ENCODE measurements at regions of chr1 and their contacts with region 1.

Region 1: DNA sequence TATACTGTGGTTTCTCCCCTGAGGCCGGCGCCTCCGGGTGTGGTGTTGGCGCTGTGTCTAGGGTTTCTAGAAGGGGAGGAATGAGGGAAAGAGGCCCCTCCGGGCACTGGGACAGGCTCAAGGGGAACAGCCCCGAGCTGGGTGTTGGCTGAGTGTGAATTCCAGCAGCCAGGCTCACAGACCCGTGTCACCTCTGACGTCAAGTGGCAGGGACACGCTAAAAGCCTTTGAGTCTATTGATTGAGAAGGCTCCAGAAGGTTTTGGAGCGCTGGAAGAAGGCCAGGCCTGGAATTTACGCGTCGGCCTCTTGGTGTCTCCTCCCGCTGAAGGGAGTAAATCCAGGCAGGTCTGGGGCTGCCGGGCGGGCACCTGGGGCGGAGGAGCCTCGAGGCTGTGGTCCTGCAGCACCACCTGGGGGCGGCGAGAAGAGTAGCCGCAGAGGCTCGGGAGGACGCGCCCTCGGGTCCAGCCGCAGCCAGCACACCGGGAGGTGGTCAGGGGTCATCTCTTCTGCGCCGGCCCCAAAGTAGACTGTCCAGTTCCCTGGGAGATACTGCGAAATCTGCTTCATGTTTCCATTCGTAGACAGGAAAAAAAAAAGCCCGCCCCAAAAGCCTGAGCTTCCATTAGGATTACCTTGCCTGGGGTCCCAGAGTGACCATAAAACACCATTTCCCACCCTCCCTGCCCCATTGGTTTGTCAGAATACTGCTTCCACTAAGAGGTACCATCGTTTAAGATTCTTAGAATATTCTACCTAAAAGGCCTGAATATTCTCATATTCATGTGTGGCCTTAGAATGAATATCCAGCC is 61.7 kb downstream of the TLR5 start:
- DNase-seq: peak; percentile 85
- ATAC-seq: peak; percentile 97
- H3K4me3 ChIP-seq: peak overlapping the region; percentile 11 to 85 (median 64)
- H3K4me3 Mint-ChIP-seq: peak overlapping the region; percentile 84
- H3K27ac ChIP-seq: peak overlapping the region; percentile 34 to 71
- H3K27ac Mint-ChIP-seq: peak overlapping the region; percentile 86
- H3K4me1 ChIP-seq: no peaks in the 10 kb centered on the region
- H3K4me1 Mint-ChIP-seq: no peaks in the 10 kb centered on the region
- H3K27me3 ChIP-seq: peaks cover 0 to 5% (median 0%) of the 10 kb centered on the region in 4 experiments
- H3K27me3 Mint-ChIP-seq: peaks cover 12% of the 10 kb centered on the region
- CTCF ChIP-seq: peak; percentile 96

Region 2: DNA sequence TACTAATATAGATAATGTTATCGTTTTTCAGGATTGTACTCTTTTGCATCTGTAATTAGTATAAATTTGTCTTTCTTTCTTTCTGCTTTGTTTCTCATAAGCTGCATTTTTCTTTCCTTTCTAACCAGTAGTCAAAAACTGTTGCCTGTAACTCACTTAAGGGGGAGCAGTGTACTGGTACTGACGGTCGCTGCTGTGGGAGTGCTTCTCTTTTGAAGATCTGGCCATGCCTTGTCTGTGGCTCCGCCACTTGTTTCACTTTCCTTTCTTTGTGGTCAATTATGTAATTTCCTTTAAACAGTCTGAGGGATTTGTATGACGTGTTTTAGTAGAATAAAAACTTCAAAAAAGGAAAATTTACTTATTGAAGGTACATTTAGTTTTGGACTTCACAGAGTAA is 426.5 kb before region 1 on chr1:
- CTCF ChIA-PET with region 1: interaction called, 17 read pairs
- POLR2A ChIA-PET with region 1: no interaction called
- intact Hi-C with region 1: loop called (anchors 1 kb)
- DNase-seq: peak; percentile 88
- ATAC-seq: peak; percentile 99
- H3K4me3 ChIP-seq: no peak overlapping the region
- H3K4me3 Mint-ChIP-seq: peak overlapping the region; percentile 40
- H3K27ac ChIP-seq: peak overlapping the region; percentile 81 to 95
- H3K27ac Mint-ChIP-seq: peak overlapping the region; percentile 59
- H3K4me1 ChIP-seq: peaks cover 16 to 20% of the 10 kb centered on the region in 2 donors
- H3K4me1 Mint-ChIP-seq: peaks cover 35% of the 10 kb centered on the region
- H3K27me3 ChIP-seq: no peaks in the 10 kb centered on the region
- H3K27me3 Mint-ChIP-seq: no peaks in the 10 kb centered on the region
- CTCF ChIP-seq: peak; percentile 51

Region 3: GRCh38 chr1:222732216-222733159 is 348.9 kb before region 1 on chr1:
- CTCF ChIA-PET with region 1: interaction called, 18 read pairs
- POLR2A ChIA-PET with region 1: no interaction called
- intact Hi-C with region 1: no loop called
- DNase-seq: peak; percentile 84
- ATAC-seq: peak; percentile 82
- H3K4me3 ChIP-seq: peak overlapping the region in 3 of 5 experiments; percentile 13 to 45 (median 27)
- H3K4me3 Mint-ChIP-seq: peak overlapping the region; percentile 78
- H3K27ac ChIP-seq: peak overlapping the region; percentile 62 to 84
- H3K27ac Mint-ChIP-seq: peak overlapping the region; percentile 93
- H3K4me1 ChIP-seq: peaks cover 56 to 68% of the 10 kb centered on the region in 2 donors
- H3K4me1 Mint-ChIP-seq: peaks cover 56% of the 10 kb centered on the region
- H3K27me3 ChIP-seq: no peaks in the 10 kb centered on the region
- H3K27me3 Mint-ChIP-seq: no peaks in the 10 kb centered on the region
- CTCF ChIP-seq: no peak

Region 4: DNA sequence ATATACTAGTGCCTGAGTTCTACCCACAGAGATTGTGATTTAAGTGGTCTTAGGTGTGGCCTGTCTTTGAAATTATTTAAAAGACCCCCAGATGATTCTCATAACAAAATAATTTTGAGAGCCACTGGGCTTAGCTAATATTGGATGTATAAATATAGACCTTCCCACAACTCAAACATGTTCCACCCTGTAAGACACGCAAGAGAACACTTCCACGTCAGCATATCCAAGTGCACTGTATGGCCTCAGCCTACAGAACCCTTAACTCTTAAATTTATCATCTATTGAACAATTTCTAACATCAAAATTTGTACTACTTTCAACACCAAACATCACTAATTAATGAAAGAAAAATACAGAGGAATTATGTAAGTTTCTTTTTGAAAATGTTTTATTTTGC is 341.9 kb before region 1 on chr1:
- CTCF ChIA-PET with region 1: interaction called, 18 read pairs
- POLR2A ChIA-PET with region 1: interaction called, 4 read pairs
- intact Hi-C with region 1: loop called (anchors 1 kb)
- DNase-seq: no peak
- ATAC-seq: no peak
- H3K4me3 ChIP-seq: peak overlapping the region; percentile 17 to 53 (median 33)
- H3K4me3 Mint-ChIP-seq: no peak overlapping the region
- H3K27ac ChIP-seq: peak overlapping the region; percentile 50 to 77
- H3K27ac Mint-ChIP-seq: no peak overlapping the region
- H3K4me1 ChIP-seq: peaks cover 58 to 61% of the 10 kb centered on the region in 2 donors
- H3K4me1 Mint-ChIP-seq: peaks cover 44% of the 10 kb centered on the region
- H3K27me3 ChIP-seq: no peaks in the 10 kb centered on the region
- H3K27me3 Mint-ChIP-seq: no peaks in the 10 kb centered on the region
- CTCF ChIP-seq: no peak

Region 5: DNA sequence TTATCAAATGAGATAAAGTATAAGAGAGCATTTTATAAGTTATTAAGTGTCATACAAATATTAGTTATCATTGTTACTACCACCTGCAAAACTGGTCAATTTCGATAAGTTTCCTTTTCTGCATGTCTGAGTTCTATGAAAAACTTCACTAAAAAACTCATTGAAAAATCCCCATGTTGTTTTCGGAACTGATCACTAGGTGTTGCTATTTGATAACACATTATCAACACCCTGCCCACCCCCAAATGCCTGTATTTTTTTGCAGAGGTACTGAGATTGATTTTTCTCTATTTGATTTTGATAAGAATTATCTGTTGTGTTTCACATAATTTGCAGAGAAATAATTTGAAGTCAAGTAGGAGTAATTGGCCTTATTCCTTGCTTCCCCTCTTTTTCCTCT is 288.6 kb before region 1 on chr1:
- CTCF ChIA-PET with region 1: interaction called, 120 read pairs
- POLR2A ChIA-PET with region 1: interaction called, 3 read pairs
- intact Hi-C with region 1: loop called (anchors 1 kb)
- DNase-seq: peak; percentile 54
- ATAC-seq: peak; percentile 54
- H3K4me3 ChIP-seq: no peak overlapping the region
- H3K4me3 Mint-ChIP-seq: no peak overlapping the region
- H3K27ac ChIP-seq: no peak overlapping the region
- H3K27ac Mint-ChIP-seq: peak overlapping the region; percentile 47
- H3K4me1 ChIP-seq: peaks cover 16 to 21% of the 10 kb centered on the region in 2 donors
- H3K4me1 Mint-ChIP-seq: peaks cover 40% of the 10 kb centered on the region
- H3K27me3 ChIP-seq: no peaks in the 10 kb centered on the region
- H3K27me3 Mint-ChIP-seq: no peaks in the 10 kb centered on the region
- CTCF ChIP-seq: peak; percentile 69

Region 6: DNA sequence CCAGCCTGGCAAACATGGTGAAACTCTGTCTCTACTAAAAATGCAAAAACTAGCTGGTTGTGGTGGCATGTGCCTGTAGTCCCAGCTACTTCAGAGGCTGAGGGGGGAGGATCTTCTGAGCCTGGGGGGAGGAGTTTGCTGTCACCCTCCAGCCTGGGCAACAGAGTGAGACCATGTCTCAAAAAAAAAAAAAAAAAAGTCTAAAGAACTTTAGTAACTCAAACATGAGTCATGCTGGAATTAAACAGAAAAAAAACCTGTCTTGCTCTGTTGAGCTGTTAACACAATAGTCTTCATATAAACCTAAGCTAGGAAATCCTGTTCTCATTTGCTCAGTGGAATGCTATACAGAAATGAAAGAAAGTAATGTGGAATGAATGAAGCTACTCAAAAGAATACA is 283.3 kb before region 1 on chr1:
- CTCF ChIA-PET with region 1: interaction called, 120 read pairs
- POLR2A ChIA-PET with region 1: interaction called, 3 read pairs
- intact Hi-C with region 1: no loop called
- DNase-seq: peak; percentile 61
- ATAC-seq: peak; percentile 98
- H3K4me3 ChIP-seq: no peak overlapping the region
- H3K4me3 Mint-ChIP-seq: no peak overlapping the region
- H3K27ac ChIP-seq: no peak overlapping the region
- H3K27ac Mint-ChIP-seq: peak overlapping the region; percentile 70
- H3K4me1 ChIP-seq: peaks cover 14 to 18% of the 10 kb centered on the region in 2 donors
- H3K4me1 Mint-ChIP-seq: peaks cover 13% of the 10 kb centered on the region
- H3K27me3 ChIP-seq: no peaks in the 10 kb centered on the region
- H3K27me3 Mint-ChIP-seq: no peaks in the 10 kb centered on the region
- CTCF ChIP-seq: no peak

Region 7: DNA sequence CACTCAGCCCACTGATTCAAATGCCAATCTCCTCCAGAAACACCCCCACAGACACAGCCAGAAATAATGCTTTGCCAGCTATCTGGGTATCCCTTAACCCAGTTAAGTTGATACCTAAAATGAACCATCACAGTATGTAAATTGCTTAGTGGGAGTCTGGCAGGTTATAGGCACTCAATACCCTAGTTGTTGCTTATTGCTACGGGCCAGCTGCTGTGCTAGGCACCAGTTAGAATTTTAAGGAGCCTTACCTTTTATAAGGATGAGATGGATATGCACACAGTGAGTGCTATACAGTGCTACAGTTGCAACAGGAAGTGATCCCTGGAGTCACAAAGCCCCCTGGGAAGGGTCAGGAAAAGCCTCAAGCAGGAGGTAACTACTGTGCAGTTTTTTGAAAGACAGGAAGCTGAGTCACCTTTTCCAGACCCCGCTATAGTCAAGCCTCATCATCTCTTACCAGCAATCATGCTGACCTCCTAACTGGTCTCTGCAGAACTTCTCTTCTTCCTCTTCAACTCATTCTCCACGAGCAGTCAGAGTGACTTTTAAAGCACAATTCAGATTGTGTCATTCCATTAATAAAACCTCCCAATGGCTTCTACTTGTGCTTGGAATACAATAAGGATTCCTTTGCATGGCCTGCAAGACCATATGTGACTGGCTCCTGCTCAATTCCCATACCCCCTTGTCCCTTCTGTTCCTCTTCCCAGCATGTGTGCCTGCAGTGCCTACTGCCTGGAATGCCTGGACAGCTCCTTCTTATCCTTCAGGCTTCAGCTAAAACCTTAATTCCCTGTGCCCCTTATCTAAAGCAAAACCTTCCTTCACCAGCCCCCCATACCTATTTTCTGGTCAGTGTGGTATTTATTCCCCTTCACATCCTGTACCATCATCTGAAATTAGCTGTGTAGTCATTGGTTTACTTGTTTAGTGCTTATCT is 72.1 kb after region 1 on chr1:
- CTCF ChIA-PET with region 1: no interaction called
- POLR2A ChIA-PET with region 1: no interaction called
- intact Hi-C with region 1: no loop called
- DNase-seq: no peak
- ATAC-seq: no peak
- H3K4me3 ChIP-seq: no peak overlapping the region
- H3K4me3 Mint-ChIP-seq: no peak overlapping the region
- H3K27ac ChIP-seq: no peak overlapping the region
- H3K27ac Mint-ChIP-seq: no peak overlapping the region
- H3K4me1 ChIP-seq: no peaks in the 10 kb centered on the region
- H3K4me1 Mint-ChIP-seq: no peaks in the 10 kb centered on the region
- H3K27me3 ChIP-seq: peaks cover 0 to 11% (median 1%) of the 10 kb centered on the region in 4 experiments
- H3K27me3 Mint-ChIP-seq: peaks cover 29% of the 10 kb centered on the region
- CTCF ChIP-seq: no peak